ENCODE measurements at regions of chr6 and their contacts with region 1.

Region 1: DNA sequence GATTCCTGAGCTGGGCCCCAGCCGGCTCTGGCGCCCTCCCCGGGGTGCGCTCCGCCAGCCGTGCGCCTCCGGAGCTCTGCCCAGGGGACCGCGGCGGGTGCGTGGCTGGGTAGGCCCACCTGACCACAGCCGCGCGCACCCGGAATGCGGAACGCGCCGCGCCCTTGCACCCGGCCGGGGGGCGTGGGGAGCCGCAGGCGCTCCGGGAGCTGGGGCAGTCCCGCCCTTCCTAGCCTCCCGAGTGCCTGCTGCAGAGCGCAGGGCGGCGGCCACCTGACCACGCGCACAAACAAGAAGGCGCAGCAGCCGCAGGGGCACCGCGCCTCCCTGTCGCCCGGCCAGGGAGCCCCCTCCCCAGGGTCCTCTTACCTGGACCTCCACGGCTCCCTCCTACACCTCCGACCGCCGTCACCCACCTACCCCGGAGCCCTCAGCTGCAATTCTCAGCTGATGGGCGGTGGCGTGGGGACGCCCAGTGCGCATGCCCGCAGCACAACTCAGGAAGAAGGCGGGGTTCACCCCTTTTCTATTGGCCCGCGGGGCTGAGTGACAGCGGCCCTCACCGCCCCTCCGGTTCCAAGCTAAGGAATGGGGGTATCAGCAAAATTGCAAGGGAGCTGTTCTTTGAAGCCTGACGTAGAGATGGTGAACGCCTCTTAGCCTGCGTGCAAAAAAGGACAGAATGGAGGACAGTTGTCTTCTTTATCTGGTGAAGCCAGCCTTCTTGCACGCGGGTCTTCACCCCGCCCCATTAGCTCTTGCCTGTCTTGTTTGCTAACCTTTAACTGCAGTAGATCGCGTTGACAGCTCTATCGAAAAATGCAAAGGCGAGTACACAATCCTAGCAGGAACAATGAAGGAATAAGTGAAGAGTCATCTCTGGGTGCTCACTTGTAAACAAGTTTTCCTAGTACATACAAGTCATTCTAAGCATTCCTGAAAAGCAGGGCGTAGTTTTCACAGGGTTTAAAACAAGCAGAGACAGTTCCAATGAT is at the start of gene STX7:
- DNase-seq: peak; percentile 70 to 92 (median 82)
- ATAC-seq: peak; percentile 93
- H3K4me3 ChIP-seq: peak within 1 kb of the TSS; percentile 76
- H3K4me3 Mint-ChIP-seq: peak within 1 kb of the TSS; percentile 99
- H3K27ac ChIP-seq: peak within 1 kb of the TSS in 1 of 2 donors; percentile 39
- H3K27ac Mint-ChIP-seq: peak within 1 kb of the TSS; percentile 86
- H3K4me1 ChIP-seq: peaks cover 3% of the 10 kb centered on the region
- H3K4me1 Mint-ChIP-seq: peaks cover 42% of the 10 kb centered on the region
- H3K27me3 ChIP-seq: no peaks in the 10 kb centered on the region
- H3K27me3 Mint-ChIP-seq: peaks cover 2% of the 10 kb centered on the region
- CTCF ChIP-seq: no peak
- total RNA-seq, gene STX7: 4.3 to 5.9 TPM

Region 2: GRCh38 chr6:132456700-132457143 is 56.2 kb before region 1 on chr6:
- CTCF ChIA-PET with region 1: no interaction called
- POLR2A ChIA-PET with region 1: no interaction called
- intact Hi-C with region 1: no loop called
- DNase-seq: peak in 1 of 14 experiments; percentile 6
- ATAC-seq: no peak
- H3K4me3 ChIP-seq: no peak overlapping the region
- H3K4me3 Mint-ChIP-seq: no peak overlapping the region
- H3K27ac ChIP-seq: no peak overlapping the region
- H3K27ac Mint-ChIP-seq: no peak overlapping the region
- H3K4me1 ChIP-seq: no peaks in the 10 kb centered on the region
- H3K4me1 Mint-ChIP-seq: no peaks in the 10 kb centered on the region
- H3K27me3 ChIP-seq: no peaks in the 10 kb centered on the region
- H3K27me3 Mint-ChIP-seq: no peaks in the 10 kb centered on the region
- CTCF ChIP-seq: no peak

Region 3: DNA sequence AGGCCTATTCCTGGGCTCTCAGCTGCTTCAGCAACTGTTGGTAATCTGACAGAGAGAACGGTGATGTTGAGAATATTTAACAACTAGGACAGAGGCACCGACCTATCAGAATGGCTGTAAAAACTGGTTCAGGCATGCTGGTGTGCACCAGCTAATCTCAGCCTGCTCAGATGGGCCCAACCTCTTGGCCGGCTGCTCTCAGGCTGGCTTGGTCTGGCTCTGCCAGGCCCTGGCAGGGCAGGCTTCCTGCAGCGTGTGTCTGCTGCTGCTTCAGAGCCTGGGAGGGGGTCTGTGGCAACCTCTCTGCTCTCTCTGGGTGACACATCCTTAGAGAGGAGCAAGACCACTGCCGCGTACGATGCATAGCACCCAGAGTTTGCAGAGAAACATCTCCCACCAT is 1534.7 kb after region 1 on chr6:
- CTCF ChIA-PET with region 1: no interaction called
- POLR2A ChIA-PET with region 1: no interaction called
- intact Hi-C with region 1: loop called in 1 of 2 experiments (anchors 5 kb)
- DNase-seq: no peak
- ATAC-seq: no peak
- H3K4me3 ChIP-seq: no peak overlapping the region
- H3K4me3 Mint-ChIP-seq: no peak overlapping the region
- H3K27ac ChIP-seq: no peak overlapping the region
- H3K27ac Mint-ChIP-seq: no peak overlapping the region
- H3K4me1 ChIP-seq: peaks cover 8% of the 10 kb centered on the region
- H3K4me1 Mint-ChIP-seq: peaks cover 4% of the 10 kb centered on the region
- H3K27me3 ChIP-seq: peaks cover 0 to 8% of the 10 kb centered on the region in 2 experiments
- H3K27me3 Mint-ChIP-seq: no peaks in the 10 kb centered on the region
- CTCF ChIP-seq: no peak

Measured in CD4-positive, alpha-beta T cell (primary cell).